ENCODE measurements at regions of chr11 and their contacts with region 1.

Region 1: GRCh38 chr11:67277231-67277961 is 11.1 kb downstream of the GRK2 start:
- DNase-seq: peak; percentile 96 to 98 (median 96)
- H3K4me3 ChIP-seq: peak overlapping the region; percentile 3 to 97 (median 23)
- H3K4me3 Mint-ChIP-seq: peak overlapping the region; percentile 73 to 84
- H3K27ac ChIP-seq: peak overlapping the region; percentile 92 to 99
- H3K27ac Mint-ChIP-seq: peak overlapping the region; percentile 93 to 98 (median 97)
- H3K4me1 ChIP-seq: peaks cover 100% of the 10 kb centered on the region in 2 donors
- H3K4me1 Mint-ChIP-seq: peaks cover 98% of the 10 kb centered on the region
- H3K27me3 ChIP-seq: no peaks in the 10 kb centered on the region
- H3K27me3 Mint-ChIP-seq: peaks cover 0 to 6% (median 4%) of the 10 kb centered on the region in 3 donors
- CTCF ChIP-seq: no peak

Region 2: DNA sequence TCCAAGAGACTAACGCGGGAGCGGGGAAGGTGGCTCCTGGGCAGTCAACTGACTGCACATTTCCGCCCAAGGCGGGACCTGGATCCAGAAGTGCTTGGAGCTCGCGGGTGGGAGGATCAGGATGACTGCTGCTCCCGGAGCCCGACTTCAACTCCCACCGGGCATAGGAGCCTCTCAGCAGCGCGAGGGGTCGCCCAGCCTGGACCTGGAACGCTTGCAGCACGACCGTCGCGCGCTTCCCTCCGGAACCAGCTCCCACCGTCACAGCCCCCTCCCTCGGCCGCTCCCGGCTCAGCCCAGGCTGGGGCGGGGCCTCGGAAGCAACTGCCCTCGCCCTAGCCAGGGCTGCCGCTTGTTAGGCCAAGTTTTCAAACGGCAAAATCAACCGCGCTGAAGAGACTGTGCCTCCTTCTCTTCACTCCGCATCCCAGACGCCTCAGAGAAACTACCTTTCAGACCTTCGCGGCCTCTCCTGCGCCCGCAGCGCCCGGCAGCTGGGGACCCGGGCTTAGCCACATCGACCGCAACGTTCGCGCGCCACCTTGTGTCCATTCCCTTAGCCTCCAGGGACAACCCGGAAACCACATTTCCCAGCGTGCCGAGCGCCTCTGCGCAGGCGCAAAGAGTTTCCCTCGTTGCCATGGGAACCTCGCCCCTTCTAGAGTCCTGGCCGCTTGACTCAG is 40.0 kb after region 1 on chr11:
- intact Hi-C with region 1: loop called in 1 of 2 experiments (anchors 1 kb)
- DNase-seq: peak; percentile 92 to 98 (median 95)
- H3K4me3 ChIP-seq: peak overlapping the region; percentile 63 to 91 (median 85)
- H3K4me3 Mint-ChIP-seq: peak overlapping the region; percentile 93 to 99
- H3K27ac ChIP-seq: peak overlapping the region; percentile 61 to 67
- H3K27ac Mint-ChIP-seq: peak overlapping the region; percentile 89 to 97 (median 95)
- H3K4me1 ChIP-seq: peaks cover 34 to 40% of the 10 kb centered on the region in 2 donors
- H3K4me1 Mint-ChIP-seq: peaks cover 33% of the 10 kb centered on the region
- H3K27me3 ChIP-seq: peaks cover 0 to 4% of the 10 kb centered on the region in 2 donors
- H3K27me3 Mint-ChIP-seq: peaks cover 4 to 17% (median 12%) of the 10 kb centered on the region in 3 donors
- CTCF ChIP-seq: peak; percentile 88